H1 (cell line): ENCODE measurements at regions of chr20 and their contacts with region 1.

Region 1: GRCh38 chr20:330233-331149 is 5.1 kb downstream of the SOX12 start:
- DNase-seq: peak in 1 of 2 experiments; percentile 66
- H3K4me3 ChIP-seq: peak overlapping the region in 1 of 4 experiments; percentile 14; a peak in 1 of 8 replicates
- H3K27ac ChIP-seq: no peak overlapping the region
- H3K4me1 ChIP-seq: peaks cover 11 to 26% (median 16%) of the 10 kb centered on the region in 4 experiments
- H3K27me3 ChIP-seq: peaks cover 0 to 4% (median 0%) of the 10 kb centered on the region in 4 experiments; a peak in 1 of 7 replicates
- CTCF ChIP-seq: peak; percentile 86 to 90 (median 90)
- EP300 ChIP-seq: 0 out of 3 replicates have a peak, but pooled peaks of 1 of the 2 experiments have one; percentile 21
- POLR2A ChIP-seq: no peak
- RAD21 ChIP-seq: peak; percentile 87 to 94

Region 2: GRCh38 chr20:215796-216195 is 114.7 kb before region 1 on chr20:
- CTCF ChIA-PET with region 1: interaction called, 11 read pairs
- POLR2A ChIA-PET with region 1: interaction called, 4 read pairs
- DNase-seq: no peak
- H3K4me3 ChIP-seq: no peak overlapping the region
- H3K27ac ChIP-seq: no peak overlapping the region
- H3K4me1 ChIP-seq: no peaks in the 10 kb centered on the region
- H3K27me3 ChIP-seq: peaks cover 0 to 5% (median 0%) of the 10 kb centered on the region in 4 experiments; a peak in 2 of 7 replicates
- CTCF ChIP-seq: no peak
- EP300 ChIP-seq: no peak
- POLR2A ChIP-seq: no peak
- RAD21 ChIP-seq: no peak

Region 3: GRCh38 chr20:278607-279571 is 51.6 kb before region 1 on chr20:
- CTCF ChIA-PET with region 1: interaction called, 54 read pairs
- POLR2A ChIA-PET with region 1: interaction called, 28 read pairs
- DNase-seq: peak in 1 of 2 experiments; percentile 61
- H3K4me3 ChIP-seq: peak overlapping the region; percentile 4 to 47 (median 20); a peak in 6 of 8 replicates
- H3K27ac ChIP-seq: no peak overlapping the region
- H3K4me1 ChIP-seq: peaks cover 0 to 4% (median 4%) of the 10 kb centered on the region in 4 experiments; a peak in 4 of 7 replicates
- H3K27me3 ChIP-seq: peaks cover 0 to 2% (median under 1%) of the 10 kb centered on the region in 4 experiments; a peak in 2 of 7 replicates
- CTCF ChIP-seq: peak in 2 of 3 experiments; percentile 51 to 63; a peak in 3 of 4 replicates
- EP300 ChIP-seq: no peak
- POLR2A ChIP-seq: no peak
- RAD21 ChIP-seq: no peak; a peak in 2 of 4 replicates

Region 4: DNA sequence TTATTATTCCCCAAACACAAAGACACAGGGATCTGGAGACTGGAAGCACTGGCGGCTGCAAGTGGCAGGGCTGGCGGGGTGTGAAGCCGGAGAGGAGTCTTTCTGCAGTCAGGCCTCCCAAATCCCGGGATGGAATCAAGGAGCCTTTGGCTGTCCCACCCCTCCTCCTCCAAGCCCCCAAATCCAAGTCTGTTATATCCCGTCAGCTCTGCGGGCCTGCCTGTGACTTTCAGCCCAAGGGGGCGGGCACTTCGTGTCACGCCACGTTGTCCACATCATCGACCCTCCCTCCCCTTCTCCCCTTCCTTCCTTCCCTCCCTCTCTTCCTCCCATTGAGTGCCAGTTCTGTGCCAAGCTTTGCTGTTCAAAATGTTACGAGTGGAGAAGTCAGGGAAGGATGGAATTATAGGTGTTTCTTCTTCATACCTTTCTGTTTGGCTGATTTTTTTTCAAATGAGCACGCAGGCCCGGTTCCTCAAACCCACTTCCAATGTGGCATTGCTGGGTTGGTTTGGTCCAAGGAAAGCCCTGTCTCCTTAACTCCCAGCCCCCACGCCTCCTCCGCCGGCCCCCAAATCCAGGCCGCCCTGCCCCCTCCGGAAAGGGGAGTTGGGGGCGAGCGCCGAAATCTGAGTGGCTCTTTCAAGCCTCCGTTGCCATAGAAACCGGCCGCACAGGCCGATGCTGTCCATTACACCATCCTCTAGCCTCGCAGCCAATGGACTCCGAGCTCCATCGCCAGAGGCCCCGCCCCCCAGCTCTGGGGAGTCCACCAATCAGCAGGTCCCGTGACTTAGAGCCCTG is 20.4 kb before region 1 on chr20:
- CTCF ChIA-PET with region 1: interaction called, 30 read pairs
- POLR2A ChIA-PET with region 1: interaction called, 97 read pairs
- DNase-seq: peak; percentile 98 to 99
- H3K4me3 ChIP-seq: peak overlapping the region; percentile 42 to 60 (median 59)
- H3K27ac ChIP-seq: peak overlapping the region; percentile 69
- H3K4me1 ChIP-seq: peaks cover 4 to 11% (median 6%) of the 10 kb centered on the region in 4 experiments
- H3K27me3 ChIP-seq: no peaks in the 10 kb centered on the region
- CTCF ChIP-seq: no peak
- EP300 ChIP-seq: no peak
- POLR2A ChIP-seq: peak; percentile 54 to 77
- RAD21 ChIP-seq: no peak

Region 5: GRCh38 chr20:347640-348484 is 17.4 kb after region 1 on chr20:
- CTCF ChIA-PET with region 1: interaction called, 33 read pairs
- POLR2A ChIA-PET with region 1: interaction called, 36 read pairs
- DNase-seq: peak; percentile 89 to 94
- H3K4me3 ChIP-seq: peak overlapping the region; percentile 63 to 90 (median 66)
- H3K27ac ChIP-seq: peak overlapping the region; percentile 85
- H3K4me1 ChIP-seq: peaks cover 0 to 12% (median 8%) of the 10 kb centered on the region in 4 experiments; a peak in 4 of 7 replicates
- H3K27me3 ChIP-seq: peaks cover 0 to 3% (median 0%) of the 10 kb centered on the region in 4 experiments; a peak in 3 of 7 replicates
- CTCF ChIP-seq: no peak
- EP300 ChIP-seq: peak in 1 of 2 experiments; percentile 65; a peak in 1 of 3 replicates
- POLR2A ChIP-seq: peak; percentile 32 to 76
- RAD21 ChIP-seq: no peak

Region 6: GRCh38 chr20:504632-505075 is 174.2 kb after region 1 on chr20:
- CTCF ChIA-PET with region 1: no interaction called
- POLR2A ChIA-PET with region 1: no interaction called
- DNase-seq: no peak
- H3K4me3 ChIP-seq: no peak overlapping the region
- H3K27ac ChIP-seq: no peak overlapping the region
- H3K4me1 ChIP-seq: no peaks in the 10 kb centered on the region
- H3K27me3 ChIP-seq: no peaks in the 10 kb centered on the region
- CTCF ChIP-seq: no peak
- EP300 ChIP-seq: no peak
- POLR2A ChIP-seq: no peak
- RAD21 ChIP-seq: no peak